Mammary epithelial cell (primary cell): ENCODE measurements at regions of chr11 and their contacts with region 1.

Region 1: GRCh38 chr11:9015677-9016076 is 11.9 kb upstream of the NRIP3 start:
- DNase-seq: peak; percentile 60
- H3K4me3 ChIP-seq: no peak overlapping the region
- H3K27ac ChIP-seq: no peak overlapping the region
- H3K4me1 ChIP-seq: no peaks in the 10 kb centered on the region
- H3K27me3 ChIP-seq: no peaks in the 10 kb centered on the region
- CTCF ChIP-seq: peak; percentile 85 to 96

Region 2: DNA sequence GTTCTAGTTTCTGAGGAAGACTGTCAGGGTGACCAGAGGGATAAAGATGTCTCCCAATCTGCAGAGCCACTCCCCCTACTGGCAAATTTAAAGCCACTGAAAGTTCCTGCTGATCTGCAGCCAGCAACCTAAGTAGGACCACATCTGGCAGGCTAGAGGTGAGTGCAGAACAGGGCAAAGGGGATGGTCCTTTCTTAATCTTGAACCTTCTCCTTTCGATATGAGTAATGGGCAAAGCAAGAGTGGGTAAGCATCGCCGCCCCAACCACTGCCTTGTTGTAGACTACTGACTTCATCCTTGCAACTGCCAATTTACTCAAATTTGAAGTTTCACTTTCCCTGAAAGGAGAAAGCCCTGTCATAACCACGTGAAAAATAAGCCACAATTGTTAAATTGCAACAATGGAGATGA is 45.0 kb after region 1 on chr11:
- CTCF ChIA-PET with region 1: no interaction called
- dilution Hi-C with region 1: no loop called
- in situ Hi-C with region 1: no loop called
- intact Hi-C with region 1: no loop called
- DNase-seq: no peak
- H3K4me3 ChIP-seq: no peak overlapping the region
- H3K27ac ChIP-seq: no peak overlapping the region
- H3K4me1 ChIP-seq: no peaks in the 10 kb centered on the region
- H3K27me3 ChIP-seq: no peaks in the 10 kb centered on the region
- CTCF ChIP-seq: peak in 1 of 2 donors; percentile 37

Region 3: DNA sequence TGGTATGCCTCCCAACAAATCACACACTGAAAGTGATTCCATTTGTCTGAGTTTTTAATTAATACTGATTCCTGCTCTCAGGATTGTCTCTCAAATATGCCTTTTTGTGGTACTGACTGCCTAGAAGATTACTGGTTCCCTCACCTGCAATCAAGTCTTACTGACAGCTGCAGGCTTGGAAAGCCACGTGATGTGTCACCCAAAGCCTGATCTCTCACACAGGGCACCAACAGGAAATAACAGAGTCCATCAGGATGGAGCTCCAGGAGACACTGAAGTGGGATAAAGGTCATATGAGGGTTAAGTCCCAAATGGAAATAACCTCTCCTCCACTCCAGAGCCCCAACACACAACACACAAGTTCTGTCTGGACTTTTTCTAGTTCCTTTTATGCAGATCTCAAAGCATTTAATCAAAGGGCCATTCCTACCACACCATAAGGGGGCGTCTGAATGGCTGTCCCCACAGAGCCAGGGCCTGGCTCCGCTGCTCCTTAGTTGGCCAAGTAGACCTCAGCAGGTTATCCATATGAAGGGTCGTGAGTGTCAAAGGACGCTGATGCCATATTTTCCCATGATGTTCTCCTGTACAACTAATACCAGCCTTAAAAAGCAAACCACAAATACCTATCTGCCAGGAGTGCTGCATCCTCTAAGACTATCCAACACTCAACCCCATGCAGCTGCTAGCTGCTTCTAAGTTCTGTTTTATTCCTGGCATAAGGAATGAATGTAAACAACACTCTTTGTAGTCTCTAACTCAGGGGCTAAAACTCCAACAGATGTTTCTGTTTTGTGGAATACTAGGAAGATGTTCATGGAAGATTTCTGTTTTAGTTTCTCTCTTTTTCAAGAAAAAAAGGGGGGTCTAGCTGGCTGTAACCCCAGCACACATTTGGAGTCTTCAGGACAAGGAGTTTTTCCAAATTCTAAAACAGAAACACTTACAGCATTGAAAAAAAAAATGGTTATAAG is 62.7 kb after region 1 on chr11:
- CTCF ChIA-PET with region 1: no interaction called
- dilution Hi-C with region 1: loop called (anchors 5 kb)
- in situ Hi-C with region 1: no loop called
- intact Hi-C with region 1: no loop called
- DNase-seq: no peak
- H3K4me3 ChIP-seq: no peak overlapping the region
- H3K27ac ChIP-seq: no peak overlapping the region
- H3K4me1 ChIP-seq: peaks cover 44% of the 10 kb centered on the region
- H3K27me3 ChIP-seq: no peaks in the 10 kb centered on the region
- CTCF ChIP-seq: no peak

Region 4: GRCh38 chr11:9130297-9130696 is 114.6 kb after region 1 on chr11:
- CTCF ChIA-PET with region 1: no interaction called
- dilution Hi-C with region 1: loop called (anchors 5 kb)
- in situ Hi-C with region 1: loop called in 1 of 2 experiments (anchors 5 kb)
- intact Hi-C with region 1: no loop called
- DNase-seq: no peak
- H3K4me3 ChIP-seq: no peak overlapping the region
- H3K27ac ChIP-seq: no peak overlapping the region
- H3K4me1 ChIP-seq: no peaks in the 10 kb centered on the region
- H3K27me3 ChIP-seq: no peaks in the 10 kb centered on the region
- CTCF ChIP-seq: no peak